ENCODE measurements at regions of chr15 and their contacts with region 1.

Region 1: DNA sequence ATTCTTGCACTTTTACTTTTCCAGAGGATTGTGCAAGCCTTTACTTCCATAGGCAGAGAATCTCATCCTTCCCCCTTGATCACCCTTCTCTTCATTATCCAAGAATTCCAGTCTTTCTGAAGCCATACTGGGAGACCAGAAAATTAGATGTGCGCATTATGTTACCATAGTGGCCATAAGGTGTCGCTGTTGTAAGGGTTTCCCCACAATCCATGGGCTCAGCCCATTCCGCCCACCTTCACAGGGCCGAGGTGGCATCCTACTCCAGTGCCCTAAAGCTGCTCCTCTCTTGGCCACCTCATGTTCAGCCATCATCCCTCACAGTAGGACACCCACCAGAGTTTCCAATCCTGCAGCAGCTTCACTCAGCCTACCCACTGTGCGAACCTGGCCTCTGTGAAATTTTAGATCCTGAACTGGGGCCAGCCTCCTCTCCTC is 35.0 kb downstream of the CTSH start:
- DNase-seq: peak; percentile 31
- H3K4me3 Mint-ChIP-seq: no peak overlapping the region
- H3K27ac Mint-ChIP-seq: no peak overlapping the region
- H3K4me1 Mint-ChIP-seq: peaks cover 13% of the 10 kb centered on the region
- H3K27me3 Mint-ChIP-seq: no peaks in the 10 kb centered on the region

Region 2: GRCh38 chr15:78880242-78880533 is 29.6 kb before region 1 on chr15:
- CTCF ChIA-PET with region 1: interaction called, 13 read pairs
- intact Hi-C with region 1: no loop called
- DNase-seq: no peak
- H3K4me3 Mint-ChIP-seq: no peak overlapping the region
- H3K27ac Mint-ChIP-seq: peak overlapping the region; percentile 4
- H3K4me1 Mint-ChIP-seq: peaks cover 75% of the 10 kb centered on the region
- H3K27me3 Mint-ChIP-seq: no peaks in the 10 kb centered on the region

Region 3: DNA sequence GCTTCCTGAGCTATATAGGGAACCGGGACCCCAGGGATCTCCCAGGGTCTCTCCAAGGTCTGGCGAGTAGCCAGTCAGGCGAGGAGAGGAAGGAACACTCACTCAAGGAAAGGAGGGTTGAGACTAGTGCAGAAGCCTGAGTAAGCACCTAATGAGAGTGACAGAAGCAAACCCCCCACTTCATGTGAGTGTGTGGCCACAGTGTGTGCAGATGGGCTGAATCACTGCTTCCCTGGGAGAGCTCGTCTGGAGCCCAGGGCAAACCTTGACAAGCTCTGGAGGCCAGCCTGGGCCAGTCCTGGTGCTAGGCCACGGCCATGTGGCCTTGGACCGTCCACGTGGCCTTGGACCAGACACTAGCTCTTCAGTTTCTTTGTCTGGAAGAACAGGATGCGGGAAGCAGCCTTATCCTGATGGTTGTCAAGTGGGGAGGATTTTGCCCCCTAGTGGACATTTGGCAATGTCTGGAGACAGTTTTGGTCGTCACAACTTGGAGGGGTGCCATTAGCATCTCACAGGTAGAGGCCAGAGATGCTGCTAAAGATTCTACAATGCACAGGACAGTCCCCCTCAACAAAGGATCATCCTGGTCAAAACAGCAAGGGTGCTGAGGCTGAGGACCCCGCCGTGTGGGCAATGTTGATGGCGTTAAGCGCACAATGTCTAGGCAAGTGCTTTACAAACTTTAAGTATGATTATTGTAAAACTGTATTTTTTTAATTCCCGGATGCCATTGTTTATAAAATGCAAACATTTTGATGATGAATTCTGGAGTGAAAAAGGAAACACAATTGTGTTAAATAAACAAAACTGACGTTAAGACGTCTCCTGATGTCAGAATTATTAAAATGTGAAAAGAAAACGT is 69.9 kb after region 1 on chr15:
- CTCF ChIA-PET with region 1: interaction called, 9 read pairs
- intact Hi-C with region 1: loop called (anchors 2 kb)
- DNase-seq: peak; percentile 52
- H3K4me3 Mint-ChIP-seq: no peak overlapping the region
- H3K27ac Mint-ChIP-seq: no peak overlapping the region
- H3K4me1 Mint-ChIP-seq: no peaks in the 10 kb centered on the region
- H3K27me3 Mint-ChIP-seq: no peaks in the 10 kb centered on the region

Region 4: DNA sequence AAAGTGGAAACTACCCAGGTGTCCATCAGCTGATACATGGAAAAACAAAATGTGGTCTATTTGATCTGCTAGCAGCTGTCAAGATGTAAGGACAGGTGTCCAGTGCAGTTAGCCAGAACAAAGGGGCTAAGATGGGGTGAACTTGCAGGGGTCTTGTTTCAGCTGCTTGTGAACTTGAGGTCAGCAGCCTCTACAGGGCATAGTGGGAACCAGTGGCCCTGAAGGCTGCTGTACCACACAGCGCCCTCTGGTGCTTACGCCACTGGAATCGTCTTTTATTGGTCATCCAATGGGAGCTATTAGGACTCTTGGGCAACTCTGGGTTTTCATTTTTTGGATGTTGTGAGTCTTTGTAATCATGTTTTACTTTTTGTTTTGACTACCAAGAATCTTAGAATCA is 97.3 kb after region 1 on chr15:
- CTCF ChIA-PET with region 1: interaction called, 3 read pairs
- intact Hi-C with region 1: loop called (anchors 1 kb)
- DNase-seq: peak; percentile 66
- H3K4me3 Mint-ChIP-seq: no peak overlapping the region
- H3K27ac Mint-ChIP-seq: no peak overlapping the region
- H3K4me1 Mint-ChIP-seq: peaks cover 9% of the 10 kb centered on the region
- H3K27me3 Mint-ChIP-seq: peaks cover 2% of the 10 kb centered on the region

Measured in activated naive CD4-positive, alpha-beta T cell treated with anti-CD3 and anti-CD28 coated beads for 36 hours (primary cell).